HEK293T (cell line): ENCODE measurements at regions of chr3 and their contacts with region 1.

Region 1: DNA sequence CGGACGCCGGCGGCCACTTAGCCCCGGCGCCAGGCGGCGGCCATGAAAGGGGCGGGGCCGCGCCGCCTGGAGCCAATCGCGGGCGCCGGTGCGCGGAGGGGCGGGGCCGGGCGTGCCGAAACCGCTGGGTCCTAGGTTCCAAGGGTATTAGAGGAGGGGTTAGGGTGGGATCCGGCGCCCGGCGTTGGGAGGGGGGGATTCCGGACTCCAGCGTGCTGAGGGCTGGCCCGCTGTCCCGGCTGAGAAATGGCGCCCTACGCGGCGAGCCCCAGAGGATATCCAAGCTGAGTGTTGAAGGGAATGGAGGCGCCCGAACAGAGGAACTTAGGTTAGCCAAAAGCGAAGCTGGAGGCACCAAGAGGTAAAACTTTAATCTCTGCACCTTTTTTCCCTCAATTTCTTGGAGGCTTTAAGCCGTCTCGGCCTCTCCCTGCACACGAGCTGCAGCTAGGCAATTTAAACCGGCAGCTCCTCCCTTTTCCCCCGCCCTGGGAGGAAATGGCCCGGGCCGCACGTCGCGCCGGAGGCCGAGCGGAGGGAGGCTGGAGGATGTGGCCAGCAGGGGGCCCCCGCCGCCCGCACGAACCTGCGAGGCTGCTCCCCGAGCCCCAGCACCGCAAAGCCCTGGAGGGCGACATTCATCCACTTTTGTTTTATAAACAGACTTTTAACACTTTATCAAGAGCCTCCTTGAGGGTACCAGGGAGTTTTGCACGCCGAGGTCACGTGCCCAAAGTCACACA is at the start of gene XXYLT1:
- DNase-seq: peak; percentile 81

Region 2: DNA sequence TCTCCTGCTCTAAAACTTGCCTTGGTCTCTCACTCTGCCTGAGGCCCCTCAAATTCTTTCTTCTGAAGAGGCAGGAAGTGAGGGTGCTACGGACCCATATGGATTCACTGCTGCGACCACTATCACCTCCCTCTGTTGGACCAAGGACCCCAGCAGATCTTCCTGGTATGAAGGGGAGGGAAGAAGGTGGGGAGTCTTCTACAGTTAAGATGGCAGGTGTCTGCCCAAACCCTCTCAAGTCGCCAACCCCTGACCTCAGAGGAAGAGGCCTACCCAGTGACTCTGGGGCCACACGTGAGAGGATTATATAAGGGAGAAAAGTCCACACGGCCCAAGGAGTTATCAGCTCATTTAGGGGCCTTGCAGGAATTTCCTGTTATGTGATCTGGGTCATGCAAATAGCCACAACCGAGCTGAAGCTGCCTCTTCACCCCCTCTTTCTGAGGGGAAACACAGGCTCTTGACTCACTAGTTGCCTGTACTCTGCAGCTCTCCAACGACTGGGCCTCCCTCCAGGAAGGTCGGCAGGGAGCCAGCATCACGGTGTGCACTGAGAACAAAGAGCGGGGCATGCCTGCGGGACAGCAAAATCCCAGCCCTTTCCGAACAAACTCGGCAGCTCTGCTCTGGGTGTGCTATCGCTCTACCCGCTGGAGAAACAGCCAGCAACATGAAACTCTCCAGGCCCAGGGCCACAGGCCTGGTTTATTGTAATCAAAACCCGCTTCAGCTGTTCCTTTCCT is 116.3 kb before region 1 on chr3:
- CTCF ChIA-PET with region 1: no interaction called
- POLR2A ChIA-PET with region 1: no interaction called
- DNase-seq: peak; percentile 9

Region 3: DNA sequence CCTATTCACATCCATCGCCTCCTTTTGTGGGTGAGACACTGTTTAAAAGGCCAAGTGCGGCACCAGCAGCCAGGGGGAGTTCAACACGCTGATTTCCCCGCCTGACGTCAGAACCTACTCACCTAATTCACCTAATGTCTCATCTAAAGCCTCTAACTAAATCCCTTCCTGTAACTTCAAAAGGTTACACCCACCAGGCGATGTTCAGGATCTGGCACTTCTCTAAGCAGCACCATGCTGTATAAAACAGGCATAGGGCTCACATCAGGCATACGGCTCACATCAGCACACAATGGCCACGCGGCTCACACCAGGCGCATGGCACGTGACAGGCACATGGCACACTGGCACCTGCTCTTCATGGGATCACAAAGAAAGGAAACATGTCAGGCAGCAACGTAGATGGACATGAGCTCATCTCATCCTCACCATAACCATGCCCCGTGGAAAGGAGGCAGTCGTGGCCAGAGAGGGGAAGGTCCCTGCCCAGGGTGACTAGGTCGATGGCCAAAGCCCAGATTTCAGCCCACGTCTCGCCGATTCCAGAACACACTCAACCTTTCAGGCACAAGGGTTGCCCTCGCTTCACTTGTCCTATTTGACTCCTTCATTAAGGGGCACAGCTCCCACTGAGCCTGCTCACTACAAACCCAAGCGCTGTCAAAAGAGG is 22.1 kb before region 1 on chr3:
- CTCF ChIA-PET with region 1: no interaction called
- POLR2A ChIA-PET with region 1: no interaction called
- DNase-seq: no peak

Region 4: GRCh38 chr3:195260280-195260905 is 10.9 kb before region 1 on chr3:
- CTCF ChIA-PET with region 1: interaction called, 9 read pairs
- POLR2A ChIA-PET with region 1: interaction called, 14 read pairs
- DNase-seq: no peak